ENCODE measurements at regions of chr4 and their contacts with region 1.

Region 1: GRCh38 chr4:80202190-80202711 is 4.9 kb downstream of the PRDM8 start:
- DNase-seq: peak; percentile 84
- ATAC-seq: peak; percentile 68
- H3K4me3 Mint-ChIP-seq: peak overlapping the region; percentile 79
- H3K27ac Mint-ChIP-seq: peak overlapping the region; percentile 81
- H3K4me1 Mint-ChIP-seq: peaks cover 23% of the 10 kb centered on the region
- H3K27me3 Mint-ChIP-seq: peaks cover 4% of the 10 kb centered on the region
- CTCF ChIP-seq: no peak

Region 2: GRCh38 chr4:80058740-80059139 is 143.5 kb before region 1 on chr4:
- CTCF ChIA-PET with region 1: interaction called, 6 read pairs
- POLR2A ChIA-PET with region 1: interaction called, 10 read pairs
- intact Hi-C with region 1: loop called (anchors 1 kb)
- DNase-seq: no peak
- ATAC-seq: peak; percentile 89
- H3K4me3 Mint-ChIP-seq: peak overlapping the region; percentile 79
- H3K27ac Mint-ChIP-seq: peak overlapping the region; percentile 99
- H3K4me1 Mint-ChIP-seq: peaks cover 30% of the 10 kb centered on the region
- H3K27me3 Mint-ChIP-seq: no peaks in the 10 kb centered on the region
- CTCF ChIP-seq: no peak

Region 3: DNA sequence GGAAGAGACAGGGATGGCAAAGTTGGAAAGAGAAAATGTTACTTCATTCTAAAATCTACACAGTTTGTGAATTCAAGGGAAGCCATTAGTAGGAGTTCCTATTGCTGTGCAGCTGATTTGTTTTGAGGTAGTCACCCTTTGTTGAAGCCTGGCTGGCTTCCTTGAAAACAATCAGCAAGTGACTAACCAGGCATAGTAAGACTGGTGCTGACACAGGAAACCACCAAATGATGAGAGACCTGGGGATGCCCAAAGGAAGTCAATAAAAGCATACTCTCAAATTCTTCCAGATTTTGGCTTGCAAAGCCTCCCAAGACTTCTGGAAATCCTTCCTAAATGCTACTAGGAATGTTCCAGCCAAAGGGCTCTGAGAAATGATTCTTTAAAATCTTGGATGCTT is 28.9 kb before region 1 on chr4:
- CTCF ChIA-PET with region 1: interaction called, 5 read pairs
- POLR2A ChIA-PET with region 1: interaction called, 14 read pairs
- intact Hi-C with region 1: no loop called
- DNase-seq: no peak
- ATAC-seq: peak; percentile 91
- H3K4me3 Mint-ChIP-seq: peak overlapping the region; percentile 70
- H3K27ac Mint-ChIP-seq: peak overlapping the region; percentile 96
- H3K4me1 Mint-ChIP-seq: peaks cover 62% of the 10 kb centered on the region
- H3K27me3 Mint-ChIP-seq: no peaks in the 10 kb centered on the region
- CTCF ChIP-seq: no peak

Region 4: GRCh38 chr4:80240976-80241375 is 38.7 kb after region 1 on chr4:
- CTCF ChIA-PET with region 1: no interaction called
- POLR2A ChIA-PET with region 1: no interaction called
- intact Hi-C with region 1: no loop called
- DNase-seq: no peak
- ATAC-seq: no peak
- H3K4me3 Mint-ChIP-seq: no peak overlapping the region
- H3K27ac Mint-ChIP-seq: no peak overlapping the region
- H3K4me1 Mint-ChIP-seq: no peaks in the 10 kb centered on the region
- H3K27me3 Mint-ChIP-seq: peaks cover 8% of the 10 kb centered on the region
- CTCF ChIP-seq: no peak

Region 5: GRCh38 chr4:80876810-80877209 is 674.6 kb after region 1 on chr4:
- CTCF ChIA-PET with region 1: no interaction called
- POLR2A ChIA-PET with region 1: no interaction called
- intact Hi-C with region 1: loop called (anchors 5 kb)
- DNase-seq: no peak
- ATAC-seq: peak; percentile 50
- H3K4me3 Mint-ChIP-seq: peak overlapping the region; percentile 51
- H3K27ac Mint-ChIP-seq: peak overlapping the region; percentile 88
- H3K4me1 Mint-ChIP-seq: peaks cover 28% of the 10 kb centered on the region
- H3K27me3 Mint-ChIP-seq: no peaks in the 10 kb centered on the region
- CTCF ChIP-seq: no peak

Measured in activated B cell treated with CpG ODN at 0.5 μM for 24 hours (primary cell).